PC-3 (cell line): ENCODE measurements at regions of chr14 and their contacts with region 1.

Region 1: DNA sequence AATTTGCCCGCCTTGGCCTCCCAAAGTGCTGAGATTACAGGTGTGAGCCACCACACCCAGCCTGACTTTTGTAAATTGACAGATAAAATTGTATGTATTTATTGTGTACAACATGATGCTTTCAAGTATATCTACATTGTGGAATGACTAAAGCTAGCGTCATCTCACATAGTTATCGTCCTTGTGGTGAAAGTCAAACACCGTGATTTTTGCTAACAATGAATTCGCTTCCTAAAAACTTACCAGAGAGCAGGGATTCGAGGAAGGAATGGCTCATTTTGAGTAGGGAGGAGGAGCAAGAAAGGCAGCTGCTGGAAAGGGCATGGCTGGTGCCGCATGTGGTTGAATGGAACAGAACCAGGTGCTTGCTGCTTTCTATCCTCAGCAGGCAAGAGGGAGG is 85.4 kb downstream of the LGMN start:
- DNase-seq: peak; percentile 95
- ATAC-seq: peak; percentile 96
- H3K4me3 ChIP-seq: no peak overlapping the region
- H3K27ac ChIP-seq: peak overlapping the region; percentile 74
- H3K4me1 ChIP-seq: peaks cover 6% of the 10 kb centered on the region
- H3K27me3 ChIP-seq: no peaks in the 10 kb centered on the region
- CTCF ChIP-seq: no peak

Region 2: DNA sequence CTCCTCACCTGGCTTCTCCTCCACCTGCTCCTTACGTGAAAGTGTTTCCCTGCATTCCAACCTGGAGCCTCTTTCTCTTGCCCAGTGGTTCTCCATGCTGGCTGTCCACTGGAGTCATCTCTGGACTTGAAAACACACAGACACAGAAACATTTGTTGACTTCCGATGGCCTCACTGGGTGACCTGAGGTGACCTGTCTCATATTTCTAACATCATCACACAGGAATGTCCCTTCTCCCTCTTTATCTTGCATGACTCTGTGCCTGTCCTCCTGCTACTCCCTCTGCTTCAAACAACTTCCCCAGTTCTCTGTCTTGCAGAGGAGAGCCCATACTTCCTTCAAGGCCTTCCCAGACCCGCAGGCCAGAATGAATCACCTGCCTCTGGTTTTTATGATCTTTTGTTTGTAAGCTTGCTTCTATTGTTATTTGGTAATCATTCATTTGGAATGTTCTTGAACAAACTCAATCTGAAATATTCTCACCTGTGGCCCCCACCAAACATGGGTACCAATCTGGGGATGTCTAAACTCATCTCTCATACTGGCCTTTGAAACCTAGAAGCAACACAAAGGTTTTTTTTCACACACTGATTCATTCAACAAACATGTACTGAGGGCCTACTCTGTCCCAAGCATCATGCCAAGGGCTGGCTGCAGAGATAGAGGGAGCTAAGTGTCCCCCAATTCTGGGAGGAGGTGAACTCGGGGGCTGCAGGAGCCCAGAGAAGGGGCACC is 159.1 kb before region 1 on chr14:
- CTCF ChIA-PET with region 1: no interaction called
- POLR2A ChIA-PET with region 1: no interaction called
- intact Hi-C with region 1: no loop called
- DNase-seq: peak; percentile 95
- ATAC-seq: peak; percentile 93
- H3K4me3 ChIP-seq: no peak overlapping the region
- H3K27ac ChIP-seq: peak overlapping the region; percentile 69
- H3K4me1 ChIP-seq: peaks cover 61% of the 10 kb centered on the region
- H3K27me3 ChIP-seq: no peaks in the 10 kb centered on the region
- CTCF ChIP-seq: no peak

Region 3: GRCh38 chr14:92619671-92620456 is 43.2 kb before region 1 on chr14:
- CTCF ChIA-PET with region 1: no interaction called
- POLR2A ChIA-PET with region 1: no interaction called
- intact Hi-C with region 1: loop called (anchors 1 kb)
- DNase-seq: peak; percentile 26
- ATAC-seq: peak; percentile 72
- H3K4me3 ChIP-seq: no peak overlapping the region
- H3K27ac ChIP-seq: peak overlapping the region; percentile 49
- H3K4me1 ChIP-seq: peaks cover 26% of the 10 kb centered on the region
- H3K27me3 ChIP-seq: no peaks in the 10 kb centered on the region
- CTCF ChIP-seq: no peak